ENCODE measurements at regions of chr5 and their contacts with region 1.

Region 1: GRCh38 chr5:134662971-134663370 is 14.4 kb downstream of the SEC24A start:
- DNase-seq: no peak
- ATAC-seq: no peak
- H3K4me3 ChIP-seq: no peak overlapping the region
- H3K27ac ChIP-seq: no peak overlapping the region
- H3K4me1 ChIP-seq: peaks cover 20% of the 10 kb centered on the region
- H3K27me3 ChIP-seq: no peaks in the 10 kb centered on the region
- CTCF ChIP-seq: no peak
- EP300 ChIP-seq: no peak
- POLR2A ChIP-seq: no peak
- RAD21 ChIP-seq: no peak

Region 2: GRCh38 chr5:134592141-134592746 is 70.7 kb before region 1 on chr5:
- CTCF ChIA-PET with region 1: no interaction called
- POLR2A ChIA-PET with region 1: interaction called, 3 read pairs
- in situ Hi-C with region 1: no loop called
- intact Hi-C with region 1: loop called (anchors 5 kb)
- DNase-seq: no peak
- ATAC-seq: peak; percentile 16
- H3K4me3 ChIP-seq: peak overlapping the region; percentile 21 to 56 (median 26); a peak in 3 of 6 replicates
- H3K27ac ChIP-seq: no peak overlapping the region
- H3K4me1 ChIP-seq: peaks cover 69% of the 10 kb centered on the region
- H3K27me3 ChIP-seq: no peaks in the 10 kb centered on the region
- CTCF ChIP-seq: no peak
- EP300 ChIP-seq: no peak
- POLR2A ChIP-seq: no peak
- RAD21 ChIP-seq: no peak

Measured in HepG2 (cell line).